Astrocyte of the cerebellum (primary cell): ENCODE measurements at regions of chr9 and their contacts with region 1.

Region 1: GRCh38 chr9:115591584-115591984 is 473.6 kb upstream of the TNC start:
- DNase-seq: peak; percentile 99
- H3K4me3 ChIP-seq: no peak overlapping the region
- CTCF ChIP-seq: peak; percentile 95

Region 2: DNA sequence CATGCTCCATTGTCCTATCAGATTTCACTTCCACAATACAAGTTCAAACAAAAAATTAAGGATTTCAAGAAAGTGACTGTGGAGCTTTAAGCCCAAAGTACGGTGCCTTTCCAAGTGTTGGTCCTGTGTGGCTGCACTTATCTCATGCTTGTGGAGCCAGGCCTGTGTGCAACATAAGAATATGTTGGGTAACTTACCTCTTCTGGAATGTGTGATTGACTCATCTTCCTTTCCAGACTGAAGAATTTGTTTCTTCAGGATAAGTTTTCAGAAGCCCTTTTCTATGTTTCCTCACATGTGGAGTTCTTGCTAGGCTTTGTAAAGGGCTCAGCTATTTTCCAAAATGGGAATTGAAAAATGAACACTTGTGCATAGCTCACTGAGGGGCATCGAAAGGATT is 76.9 kb after region 1 on chr9:
- in situ Hi-C with region 1: loop called (anchors 5 kb)
- DNase-seq: no peak
- H3K4me3 ChIP-seq: no peak overlapping the region
- CTCF ChIP-seq: no peak

Region 3: DNA sequence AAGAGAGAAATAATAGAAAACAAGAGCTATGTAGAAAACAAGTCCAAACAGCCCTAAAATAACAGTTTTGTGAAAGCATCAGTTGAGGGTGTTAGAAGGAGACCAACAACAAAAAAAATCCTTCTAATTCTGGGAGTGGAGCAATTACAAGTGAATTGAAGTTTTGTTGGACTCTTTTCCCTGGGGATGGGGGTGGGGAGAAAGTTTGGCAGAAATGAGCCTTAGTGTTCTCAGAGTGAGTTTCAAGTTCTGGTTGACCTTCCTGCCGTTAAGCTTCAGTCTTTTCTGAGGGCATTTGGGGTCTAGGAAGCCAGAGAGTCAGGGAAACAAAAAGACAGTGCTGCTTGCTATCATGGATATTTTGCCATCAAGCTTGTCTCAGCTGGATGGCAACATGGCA is 989.3 kb after region 1 on chr9:
- in situ Hi-C with region 1: loop called (anchors 5 kb)
- DNase-seq: no peak
- H3K4me3 ChIP-seq: no peak overlapping the region
- CTCF ChIP-seq: no peak

Region 4: DNA sequence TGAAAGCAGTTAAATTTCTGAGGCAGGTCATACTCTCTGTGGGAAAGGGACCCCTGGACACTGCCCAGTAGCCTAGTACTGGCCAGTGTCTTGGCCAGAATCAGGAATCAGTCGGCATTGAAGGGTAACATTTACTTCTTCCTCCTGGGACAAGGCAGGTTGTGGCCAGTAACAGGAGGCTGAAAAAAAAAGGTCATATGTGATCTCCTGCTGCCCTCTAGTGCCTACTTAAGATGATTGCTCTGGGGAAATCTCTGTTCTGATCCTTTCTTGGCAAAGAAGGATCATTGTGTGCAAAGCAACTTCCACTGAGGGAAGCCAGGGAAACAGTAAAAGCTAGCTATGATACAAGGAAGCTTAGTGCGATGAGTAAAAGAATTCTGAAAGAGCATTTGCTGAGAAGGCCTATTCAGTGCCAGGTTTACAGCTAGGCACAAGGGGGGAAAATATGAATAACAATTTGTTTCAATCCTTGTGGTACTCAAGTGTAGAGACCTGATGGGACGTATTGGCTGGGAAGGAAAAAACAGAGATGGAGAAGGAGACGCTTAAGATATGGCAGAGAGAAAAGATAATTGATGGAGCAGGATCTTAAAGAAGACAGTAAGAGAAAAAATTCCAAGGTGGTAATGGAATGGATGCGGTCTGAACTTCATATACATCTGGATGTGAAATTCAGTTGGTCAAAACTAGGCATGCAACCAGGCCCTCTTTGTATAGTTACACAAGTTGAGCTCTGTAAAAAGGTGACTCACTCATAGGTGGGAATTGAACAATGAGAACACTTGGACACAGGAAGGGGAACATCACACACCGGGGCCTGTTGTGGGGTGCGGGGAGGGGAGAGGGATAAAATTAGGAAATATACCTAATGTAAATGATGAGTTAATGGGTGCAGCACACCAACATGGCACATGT is 1069.7 kb after region 1 on chr9:
- in situ Hi-C with region 1: loop called (anchors 25 kb)
- DNase-seq: peak; percentile 74
- H3K4me3 ChIP-seq: no peak overlapping the region
- CTCF ChIP-seq: peak; percentile 74